ENCODE measurements at regions of chr12 and their contacts with region 1.

Region 1: DNA sequence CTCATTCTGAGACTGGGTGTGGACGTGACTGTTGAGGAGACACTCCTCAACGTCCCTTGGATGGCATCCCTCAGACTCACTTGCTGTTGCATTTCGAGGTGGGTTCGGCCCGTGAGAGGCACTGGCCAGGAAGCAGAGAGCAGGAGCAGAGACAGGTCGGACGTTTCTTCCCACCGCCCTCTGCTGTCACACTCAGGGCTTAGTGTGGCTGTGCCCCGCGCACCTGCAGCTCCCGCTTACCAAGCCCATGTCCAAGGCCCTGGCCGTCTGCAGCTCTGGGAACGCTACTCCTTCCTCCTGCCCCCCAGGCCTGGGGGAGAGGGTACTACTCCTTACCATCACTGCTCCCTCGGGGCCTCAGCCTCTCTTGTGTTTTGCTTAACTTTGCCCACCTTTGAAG is 29.8 kb upstream of the PIWIL1 start:
- DNase-seq: no peak
- H3K4me3 ChIP-seq: no peak overlapping the region
- H3K27ac ChIP-seq: no peak overlapping the region
- H3K4me1 ChIP-seq: no peaks in the 10 kb centered on the region
- H3K27me3 ChIP-seq: no peaks in the 10 kb centered on the region
- CTCF ChIP-seq: no peak
- EP300 ChIP-seq: no peak
- POLR2A ChIP-seq: no peak

Region 2: DNA sequence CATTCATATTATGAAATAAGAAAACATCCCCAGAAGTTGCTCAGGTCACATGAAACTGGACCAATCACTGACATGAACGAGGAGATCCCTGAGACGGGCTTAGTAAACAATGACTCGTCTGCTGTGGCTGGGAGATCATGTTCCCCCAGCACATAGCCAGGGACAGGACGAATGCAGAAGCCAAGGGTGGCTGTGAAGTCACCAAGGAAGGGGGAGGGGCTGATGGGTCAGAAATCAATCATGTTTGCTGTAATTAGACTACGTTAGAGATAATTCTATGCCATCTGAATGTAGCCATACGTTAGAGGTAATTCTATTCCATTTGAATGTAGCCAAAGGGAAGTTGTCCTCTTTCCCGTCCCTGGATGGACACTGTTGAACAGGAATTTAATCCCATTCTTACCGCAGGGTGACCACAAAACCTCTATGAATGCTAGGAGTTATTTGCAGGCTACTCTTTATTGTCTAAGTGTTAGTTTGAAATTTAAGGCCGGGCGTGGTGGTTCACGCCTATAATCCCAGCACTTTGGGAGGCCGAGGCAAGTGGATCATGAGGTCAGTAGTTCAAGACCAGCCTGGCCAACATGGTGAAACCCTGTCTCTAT is 737.0 kb before region 1 on chr12:
- intact Hi-C with region 1: loop called in 1 of 4 experiments (anchors 5 kb)
- DNase-seq: no peak
- H3K4me3 ChIP-seq: no peak overlapping the region
- H3K27ac ChIP-seq: no peak overlapping the region
- H3K4me1 ChIP-seq: no peaks in the 10 kb centered on the region
- H3K27me3 ChIP-seq: no peaks in the 10 kb centered on the region
- CTCF ChIP-seq: no peak
- EP300 ChIP-seq: no peak
- POLR2A ChIP-seq: no peak